ENCODE measurements at regions of chr6 and their contacts with region 1.

Region 1: GRCh38 chr6:107318100-107318736 is 141.1 kb downstream of the PDSS2 start:
- DNase-seq: peak; percentile 19
- H3K4me3 ChIP-seq: no peak overlapping the region
- H3K27ac ChIP-seq: no peak overlapping the region
- H3K4me1 ChIP-seq: peaks cover 1% of the 10 kb centered on the region
- H3K27me3 ChIP-seq: no peaks in the 10 kb centered on the region
- CTCF ChIP-seq: peak; percentile 67 to 85

Region 2: DNA sequence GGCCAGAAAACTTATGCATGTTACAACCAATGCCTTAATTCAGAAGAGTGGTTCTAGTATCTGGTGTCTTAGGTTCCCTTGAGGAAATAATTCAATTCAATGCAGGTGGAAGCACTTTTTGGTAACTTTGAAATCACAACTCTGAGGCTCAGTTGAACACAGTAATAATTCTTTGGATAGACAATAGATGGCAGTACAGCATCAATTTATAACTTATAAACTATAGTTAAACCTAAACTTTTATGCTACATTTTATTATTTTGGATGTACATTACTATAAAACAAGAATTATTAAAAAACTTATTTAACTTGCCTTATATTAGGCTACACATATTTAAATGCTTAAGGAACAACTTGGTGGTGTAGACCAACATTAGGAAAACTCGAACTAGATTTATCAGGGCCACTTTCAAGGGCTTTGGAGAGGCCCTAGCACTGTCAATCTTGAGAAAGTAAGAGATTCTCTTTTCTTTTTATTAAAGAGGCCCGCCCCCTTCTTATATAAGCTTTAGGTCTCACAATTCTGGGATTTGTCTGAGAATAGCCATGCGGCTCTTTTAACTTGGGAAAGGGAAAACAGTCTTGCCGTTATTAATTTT is 871.8 kb before region 1 on chr6:
- CTCF ChIA-PET with region 1: no interaction called
- dilution Hi-C with region 1: no loop called
- in situ Hi-C with region 1: no loop called
- intact Hi-C with region 1: no loop called
- DNase-seq: no peak
- H3K4me3 ChIP-seq: no peak overlapping the region
- H3K27ac ChIP-seq: no peak overlapping the region
- H3K4me1 ChIP-seq: peaks cover 31% of the 10 kb centered on the region
- H3K27me3 ChIP-seq: no peaks in the 10 kb centered on the region
- CTCF ChIP-seq: peak; percentile 39 to 43

Region 3: GRCh38 chr6:107185391-107185970 is 132.7 kb before region 1 on chr6:
- CTCF ChIA-PET with region 1: interaction called, 3 read pairs
- dilution Hi-C with region 1: no loop called
- in situ Hi-C with region 1: no loop called
- intact Hi-C with region 1: loop called (anchors 1 kb)
- DNase-seq: peak; percentile 34
- H3K4me3 ChIP-seq: no peak overlapping the region
- H3K27ac ChIP-seq: no peak overlapping the region
- H3K4me1 ChIP-seq: no peaks in the 10 kb centered on the region
- H3K27me3 ChIP-seq: no peaks in the 10 kb centered on the region
- CTCF ChIP-seq: peak; percentile 15 to 54

Region 4: GRCh38 chr6:107237992-107238660 is 80.1 kb before region 1 on chr6:
- CTCF ChIA-PET with region 1: interaction called, 3 read pairs
- dilution Hi-C with region 1: no loop called
- in situ Hi-C with region 1: no loop called
- intact Hi-C with region 1: loop called (anchors 1 kb)
- DNase-seq: peak; percentile 83
- H3K4me3 ChIP-seq: no peak overlapping the region
- H3K27ac ChIP-seq: peak overlapping the region; percentile 38
- H3K4me1 ChIP-seq: peaks cover 38% of the 10 kb centered on the region
- H3K27me3 ChIP-seq: no peaks in the 10 kb centered on the region
- CTCF ChIP-seq: no peak

Region 5: DNA sequence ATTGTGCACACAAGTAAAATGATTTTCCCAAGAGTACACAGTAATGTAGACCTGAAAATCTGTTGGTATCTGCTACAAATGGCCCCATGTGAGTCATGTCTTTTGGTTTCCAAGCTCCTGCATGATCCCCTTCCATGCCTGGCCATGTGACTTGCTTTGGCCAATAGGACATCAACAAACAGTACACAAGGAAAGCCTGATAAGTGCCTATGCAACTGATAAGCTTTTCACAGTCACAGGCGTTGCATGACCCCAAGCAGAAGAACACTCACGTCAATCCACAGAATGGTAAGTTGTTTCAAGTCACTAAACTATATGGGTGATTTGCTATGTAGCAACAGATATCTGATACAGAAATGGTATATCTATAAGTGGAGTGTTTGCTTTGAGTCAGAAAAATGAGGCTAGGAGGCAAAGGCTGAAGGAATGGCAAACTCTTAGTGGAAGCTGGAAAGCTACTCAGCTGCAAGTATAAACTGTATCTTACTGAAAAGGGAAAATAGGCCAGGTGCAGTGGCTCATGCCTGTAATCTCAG is 42.8 kb before region 1 on chr6:
- CTCF ChIA-PET with region 1: no interaction called
- dilution Hi-C with region 1: no loop called
- in situ Hi-C with region 1: no loop called
- intact Hi-C with region 1: no loop called
- DNase-seq: no peak
- H3K4me3 ChIP-seq: no peak overlapping the region
- H3K27ac ChIP-seq: no peak overlapping the region
- H3K4me1 ChIP-seq: no peaks in the 10 kb centered on the region
- H3K27me3 ChIP-seq: no peaks in the 10 kb centered on the region
- CTCF ChIP-seq: no peak

Region 6: DNA sequence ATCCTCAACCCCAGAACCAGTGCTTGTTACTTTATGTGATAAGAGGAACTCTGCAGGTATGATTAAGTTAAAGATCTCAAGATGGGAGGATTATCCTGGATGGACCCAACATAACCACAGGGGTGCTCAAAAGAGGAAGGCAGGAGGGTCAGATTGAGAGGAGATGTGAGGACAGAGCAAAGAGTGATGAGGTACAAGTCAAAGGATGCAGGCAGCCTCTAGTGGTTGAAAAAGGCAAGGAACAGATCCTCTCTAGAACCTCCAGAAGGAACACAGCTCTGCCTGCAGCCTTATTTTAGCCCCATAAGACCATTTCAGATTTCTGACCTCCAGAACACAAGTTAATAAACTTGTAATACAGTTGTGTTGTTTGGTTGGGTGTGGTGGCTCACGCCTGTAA is 99.9 kb after region 1 on chr6:
- CTCF ChIA-PET with region 1: interaction called, 3 read pairs
- dilution Hi-C with region 1: no loop called
- in situ Hi-C with region 1: no loop called
- intact Hi-C with region 1: loop called (anchors 5 kb)
- DNase-seq: peak; percentile 9
- H3K4me3 ChIP-seq: no peak overlapping the region
- H3K27ac ChIP-seq: no peak overlapping the region
- H3K4me1 ChIP-seq: no peaks in the 10 kb centered on the region
- H3K27me3 ChIP-seq: no peaks in the 10 kb centered on the region
- CTCF ChIP-seq: peak; percentile 45 to 53

Region 7: GRCh38 chr6:107459283-107460082 is 141.3 kb after region 1 on chr6 and contains the start of gene PDSS2:
- CTCF ChIA-PET with region 1: interaction called, 4 read pairs
- dilution Hi-C with region 1: no loop called
- in situ Hi-C with region 1: no loop called
- intact Hi-C with region 1: loop called (anchors 1 kb)
- DNase-seq: peak; percentile 94
- H3K4me3 ChIP-seq: peak within 1 kb of the TSS; percentile 68 to 78 (median 74)
- H3K27ac ChIP-seq: peak within 1 kb of the TSS; percentile 73
- H3K4me1 ChIP-seq: peaks cover 10% of the 10 kb centered on the region
- H3K27me3 ChIP-seq: no peaks in the 10 kb centered on the region
- CTCF ChIP-seq: peak; percentile 28 to 61
- total RNA-seq, gene PDSS2: 7.5 to 10.6 TPM

Region 8: DNA sequence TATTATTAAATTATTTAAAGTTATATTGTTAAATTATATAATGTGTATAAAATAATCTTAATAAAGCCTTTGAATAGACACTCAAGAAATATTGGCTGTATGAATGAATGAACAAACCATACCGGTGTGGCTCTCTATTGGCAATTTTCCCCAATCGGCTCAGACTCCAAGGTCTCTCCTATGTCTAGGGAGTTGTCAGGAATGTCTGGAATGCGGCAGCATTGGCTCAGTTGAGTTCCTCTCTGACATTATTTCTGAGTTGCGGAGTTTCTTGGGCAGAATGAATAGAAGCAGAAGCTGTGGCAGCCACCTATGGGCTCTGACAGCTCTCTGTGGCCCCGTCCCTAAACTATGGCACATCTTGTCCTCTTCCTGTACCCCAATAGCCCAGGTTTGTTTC is 282.7 kb after region 1 on chr6:
- CTCF ChIA-PET with region 1: no interaction called
- dilution Hi-C with region 1: no loop called
- in situ Hi-C with region 1: no loop called
- intact Hi-C with region 1: no loop called
- DNase-seq: peak; percentile 12
- H3K4me3 ChIP-seq: no peak overlapping the region
- H3K27ac ChIP-seq: no peak overlapping the region
- H3K4me1 ChIP-seq: peaks cover 5% of the 10 kb centered on the region
- H3K27me3 ChIP-seq: peaks cover 4% of the 10 kb centered on the region
- CTCF ChIP-seq: no peak

Region 9: GRCh38 chr6:107618672-107619071 is 300.5 kb after region 1 on chr6:
- CTCF ChIA-PET with region 1: no interaction called
- dilution Hi-C with region 1: no loop called
- in situ Hi-C with region 1: no loop called
- intact Hi-C with region 1: no loop called
- DNase-seq: no peak
- H3K4me3 ChIP-seq: no peak overlapping the region
- H3K27ac ChIP-seq: no peak overlapping the region
- H3K4me1 ChIP-seq: no peaks in the 10 kb centered on the region
- H3K27me3 ChIP-seq: no peaks in the 10 kb centered on the region
- CTCF ChIP-seq: no peak

Region 10: GRCh38 chr6:107655245-107655644 is 337.0 kb after region 1 on chr6:
- CTCF ChIA-PET with region 1: no interaction called
- dilution Hi-C with region 1: no loop called
- in situ Hi-C with region 1: no loop called
- intact Hi-C with region 1: loop called (anchors 1 kb)
- DNase-seq: no peak
- H3K4me3 ChIP-seq: no peak overlapping the region
- H3K27ac ChIP-seq: no peak overlapping the region
- H3K4me1 ChIP-seq: peaks cover under 1% of the 10 kb centered on the region
- H3K27me3 ChIP-seq: no peaks in the 10 kb centered on the region
- CTCF ChIP-seq: peak; percentile 1 to 45

Region 11: DNA sequence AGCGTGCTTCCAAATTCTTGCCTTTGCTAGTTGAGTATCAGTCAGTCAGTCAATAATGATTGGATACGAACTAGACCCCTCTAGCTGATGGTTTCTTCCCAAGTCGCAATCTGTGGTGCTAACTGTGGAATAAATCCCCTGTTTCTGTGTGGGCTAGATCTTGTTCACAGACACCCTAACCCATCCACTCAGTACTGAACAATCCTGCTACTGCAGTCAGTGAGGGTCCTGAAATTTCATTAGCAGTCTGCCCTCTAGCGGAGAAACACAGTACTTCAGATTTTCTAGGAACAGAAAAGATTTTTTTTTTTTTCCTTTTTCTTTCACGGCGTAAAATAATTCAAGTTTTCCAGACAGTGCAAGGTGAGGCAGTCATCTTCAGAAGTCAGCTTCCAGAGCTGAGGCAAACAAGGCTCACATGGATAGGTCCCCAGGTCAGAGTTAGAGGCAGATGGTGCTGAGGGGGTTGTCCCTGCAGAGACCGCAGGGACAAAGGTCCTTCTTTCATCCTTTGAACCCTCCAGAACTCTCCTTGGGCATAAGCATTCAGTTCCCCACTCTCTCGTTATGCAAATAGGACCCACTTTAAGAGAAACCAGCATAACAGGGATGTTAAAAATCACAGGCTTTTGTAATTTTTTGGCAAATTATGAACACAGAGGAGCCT is 386.3 kb after region 1 on chr6:
- CTCF ChIA-PET with region 1: no interaction called
- dilution Hi-C with region 1: no loop called
- in situ Hi-C with region 1: no loop called
- intact Hi-C with region 1: loop called (anchors 1 kb)
- DNase-seq: no peak
- H3K4me3 ChIP-seq: no peak overlapping the region
- H3K27ac ChIP-seq: no peak overlapping the region
- H3K4me1 ChIP-seq: no peaks in the 10 kb centered on the region
- H3K27me3 ChIP-seq: no peaks in the 10 kb centered on the region
- CTCF ChIP-seq: peak; percentile 74 to 75